Activated CD4-positive, alpha-beta T cell treated with anti-CD3 and anti-CD28 coated beads, Interleukin-2, amount 10 ng/mL, durations not matched to agents 7 days and 5 days (primary cell): ENCODE measurements at regions of chr15 and their contacts with region 1.

Region 1: DNA sequence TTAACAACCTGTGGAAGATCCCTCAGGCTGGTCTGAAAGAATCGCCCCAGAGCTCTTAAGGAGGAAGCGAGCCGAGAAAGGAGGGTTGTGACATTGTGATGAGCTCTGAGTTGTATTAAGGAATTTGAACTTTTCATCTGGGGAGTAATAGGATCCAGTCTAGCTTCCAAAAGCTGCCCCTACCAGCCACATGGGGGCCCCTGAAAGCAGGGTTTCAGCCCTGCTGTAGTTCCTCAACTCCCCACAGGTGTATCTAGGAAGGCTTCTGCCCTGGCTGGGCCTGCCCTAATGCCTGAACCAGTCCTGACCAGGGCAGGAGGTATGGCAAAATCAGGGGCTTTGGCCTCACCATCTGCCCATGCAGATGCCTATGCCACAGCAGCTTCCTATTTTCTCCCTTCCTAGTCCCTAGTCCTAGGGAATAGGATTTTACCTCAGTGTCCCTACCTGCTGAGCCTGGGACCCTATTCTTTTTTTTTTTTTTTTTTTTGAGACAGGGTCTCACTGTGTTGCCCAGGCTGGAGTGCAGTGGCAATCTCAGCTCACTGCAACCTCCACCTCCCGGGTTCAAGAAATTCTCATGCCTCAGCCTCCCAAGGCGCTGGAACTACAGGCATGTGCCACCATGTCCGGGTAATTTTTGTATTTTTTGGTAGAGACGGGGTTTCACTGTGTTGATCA is 5.0 kb upstream of the AP3S2 start:
- DNase-seq: peak; percentile 66
- H3K4me3 Mint-ChIP-seq: no peak overlapping the region
- H3K27ac Mint-ChIP-seq: no peak overlapping the region
- H3K4me1 Mint-ChIP-seq: peaks cover 10% of the 10 kb centered on the region
- H3K27me3 Mint-ChIP-seq: peaks cover 2% of the 10 kb centered on the region

Region 2: GRCh38 chr15:89845305-89845893 is 53.4 kb before region 1 on chr15:
- CTCF ChIA-PET with region 1: no interaction called
- POLR2A ChIA-PET with region 1: no interaction called
- DNase-seq: no peak
- H3K4me3 Mint-ChIP-seq: no peak overlapping the region
- H3K27ac Mint-ChIP-seq: no peak overlapping the region
- H3K4me1 Mint-ChIP-seq: peaks cover 11% of the 10 kb centered on the region
- H3K27me3 Mint-ChIP-seq: no peaks in the 10 kb centered on the region

Region 3: GRCh38 chr15:89888214-89888804 is 10.4 kb before region 1 on chr15:
- CTCF ChIA-PET with region 1: interaction called, 13 read pairs
- POLR2A ChIA-PET with region 1: no interaction called
- DNase-seq: no peak
- H3K4me3 Mint-ChIP-seq: no peak overlapping the region
- H3K27ac Mint-ChIP-seq: no peak overlapping the region
- H3K4me1 Mint-ChIP-seq: peaks cover 31% of the 10 kb centered on the region
- H3K27me3 Mint-ChIP-seq: no peaks in the 10 kb centered on the region

Region 4: GRCh38 chr15:89912674-89913396 is 14.1 kb after region 1 on chr15 and contains the start of gene ARPIN:
- CTCF ChIA-PET with region 1: no interaction called
- POLR2A ChIA-PET with region 1: no interaction called
- DNase-seq: no peak
- H3K4me3 Mint-ChIP-seq: peak within 1 kb of the TSS; percentile 29
- H3K27ac Mint-ChIP-seq: no peak within 1 kb of the TSS
- H3K4me1 Mint-ChIP-seq: no peaks in the 10 kb centered on the region
- H3K27me3 Mint-ChIP-seq: peaks cover 42% of the 10 kb centered on the region
- total RNA-seq, gene ARPIN: not detected

Region 5: GRCh38 chr15:90143166-90143655 is 244.5 kb after region 1 on chr15:
- CTCF ChIA-PET with region 1: no interaction called
- POLR2A ChIA-PET with region 1: no interaction called
- DNase-seq: peak; percentile 82
- H3K4me3 Mint-ChIP-seq: peak overlapping the region; percentile 53
- H3K27ac Mint-ChIP-seq: peak overlapping the region; percentile 96
- H3K4me1 Mint-ChIP-seq: peaks cover 56% of the 10 kb centered on the region
- H3K27me3 Mint-ChIP-seq: no peaks in the 10 kb centered on the region